ENCODE measurements at regions of chr5 and their contacts with region 1.

Region 1: GRCh38 chr5:169243651-169244422 is 57.1 kb downstream of the SLIT3 start:
- DNase-seq: no peak

Region 2: GRCh38 chr5:169218861-169219260 is 25.0 kb before region 1 on chr5:
- intact Hi-C with region 1: loop called in 1 of 2 experiments (anchors 1 kb)
- DNase-seq: no peak

Region 3: GRCh38 chr5:170006021-170006420 is 762.2 kb after region 1 on chr5:
- intact Hi-C with region 1: loop called in 1 of 2 experiments (anchors 5 kb)
- DNase-seq: no peak